PC-9 (cell line): ENCODE measurements at regions of chr10 and their contacts with region 1.

Region 1: GRCh38 chr10:103416436-103417147 is 20.2 kb downstream of the PDCD11 start:
- DNase-seq: peak; percentile 32 to 38
- H3K4me3 ChIP-seq: no peak overlapping the region
- H3K27ac ChIP-seq: no peak overlapping the region
- H3K4me1 ChIP-seq: no peaks in the 10 kb centered on the region
- H3K27me3 ChIP-seq: no peaks in the 10 kb centered on the region
- CTCF ChIP-seq: peak; percentile 74

Region 2: GRCh38 chr10:103396064-103396788 is 20.4 kb before region 1 on chr10 and contains the starts of genes ATP5MK and PDCD11:
- CTCF ChIA-PET with region 1: no interaction called
- POLR2A ChIA-PET with region 1: no interaction called
- intact Hi-C with region 1: no loop called
- DNase-seq: peak; percentile 89 to 95
- H3K4me3 ChIP-seq: peak within 1 kb of the TSS; percentile 77
- H3K27ac ChIP-seq: peak within 1 kb of the TSS; percentile 45
- H3K4me1 ChIP-seq: peaks cover 30% of the 10 kb centered on the region
- H3K27me3 ChIP-seq: no peaks in the 10 kb centered on the region
- CTCF ChIP-seq: no peak
- total RNA-seq, gene ATP5MK: 198 and 230 TPM in 2 replicates
- total RNA-seq, gene PDCD11: 20.4 and 20.5 TPM in 2 replicates

Region 3: GRCh38 chr10:103481974-103482531 is 65.5 kb after region 1 on chr10:
- CTCF ChIA-PET with region 1: interaction called, 7 read pairs
- POLR2A ChIA-PET with region 1: interaction called, 4 read pairs
- intact Hi-C with region 1: loop called (anchors 1 kb)
- DNase-seq: peak in 1 of 2 experiments; percentile 20
- H3K4me3 ChIP-seq: no peak overlapping the region
- H3K27ac ChIP-seq: no peak overlapping the region
- H3K4me1 ChIP-seq: peaks cover 39% of the 10 kb centered on the region
- H3K27me3 ChIP-seq: no peaks in the 10 kb centered on the region
- CTCF ChIP-seq: peak; percentile 70

Region 4: GRCh38 chr10:103696411-103697145 is 280.0 kb after region 1 on chr10:
- CTCF ChIA-PET with region 1: no interaction called
- POLR2A ChIA-PET with region 1: no interaction called
- intact Hi-C with region 1: loop called (anchors 5 kb)
- DNase-seq: peak; percentile 53 to 75
- H3K4me3 ChIP-seq: no peak overlapping the region
- H3K27ac ChIP-seq: peak overlapping the region; percentile 83
- H3K4me1 ChIP-seq: peaks cover 28% of the 10 kb centered on the region
- H3K27me3 ChIP-seq: no peaks in the 10 kb centered on the region
- CTCF ChIP-seq: peak; percentile 38; the same call in 1 of the 2 replicates